ENCODE measurements at regions of chr4 and their contacts with region 1.

Region 1: DNA sequence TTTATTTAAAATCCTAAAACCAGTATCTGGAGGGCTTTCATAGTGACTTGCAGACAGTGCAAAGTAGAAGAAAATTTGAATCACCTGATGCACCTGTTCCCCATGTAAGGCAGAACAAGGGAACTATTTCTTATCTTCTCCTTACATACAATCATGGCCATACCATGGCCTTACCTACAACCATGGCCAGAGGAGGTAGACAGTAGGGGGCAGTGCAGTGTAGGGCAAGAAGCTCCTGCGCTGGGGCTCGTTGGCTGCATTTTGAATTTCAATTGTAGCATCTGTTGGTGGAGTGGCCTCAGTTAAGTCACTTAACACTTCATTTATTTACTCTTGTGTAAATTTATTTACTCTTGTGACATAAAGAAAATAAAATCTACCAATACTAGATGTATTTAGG is 33.0 kb downstream of the GALNTL6 start:
- DNase-seq: peak; percentile 69
- H3K4me3 Mint-ChIP-seq: no peak overlapping the region
- H3K27ac Mint-ChIP-seq: no peak overlapping the region
- H3K4me1 Mint-ChIP-seq: no peaks in the 10 kb centered on the region
- H3K27me3 Mint-ChIP-seq: no peaks in the 10 kb centered on the region
- CTCF ChIP-seq: peak; percentile 56

Region 2: DNA sequence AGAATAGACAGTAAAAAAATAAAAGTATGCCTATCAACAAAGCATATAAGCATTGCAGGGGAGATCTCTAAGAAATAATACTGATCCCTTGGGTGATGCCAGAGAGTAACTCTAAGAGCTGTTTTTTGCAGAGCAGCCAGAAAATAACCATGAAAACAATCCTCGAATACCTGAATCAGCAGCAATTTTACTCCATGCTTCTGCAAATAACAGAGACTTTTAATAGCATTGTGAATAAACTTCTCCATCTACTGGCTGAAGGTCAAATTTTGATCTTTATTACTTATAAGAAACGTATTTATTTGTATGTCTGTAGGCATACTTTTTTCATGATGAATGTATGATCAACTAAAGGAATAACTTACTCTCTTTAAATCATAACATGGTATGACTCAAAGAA is 301.5 kb after region 1 on chr4:
- CTCF ChIA-PET with region 1: no interaction called
- intact Hi-C with region 1: loop called (anchors 2 kb)
- DNase-seq: no peak
- H3K4me3 Mint-ChIP-seq: no peak overlapping the region
- H3K27ac Mint-ChIP-seq: no peak overlapping the region
- H3K4me1 Mint-ChIP-seq: peaks cover 9% of the 10 kb centered on the region
- H3K27me3 Mint-ChIP-seq: no peaks in the 10 kb centered on the region
- CTCF ChIP-seq: no peak

Region 3: DNA sequence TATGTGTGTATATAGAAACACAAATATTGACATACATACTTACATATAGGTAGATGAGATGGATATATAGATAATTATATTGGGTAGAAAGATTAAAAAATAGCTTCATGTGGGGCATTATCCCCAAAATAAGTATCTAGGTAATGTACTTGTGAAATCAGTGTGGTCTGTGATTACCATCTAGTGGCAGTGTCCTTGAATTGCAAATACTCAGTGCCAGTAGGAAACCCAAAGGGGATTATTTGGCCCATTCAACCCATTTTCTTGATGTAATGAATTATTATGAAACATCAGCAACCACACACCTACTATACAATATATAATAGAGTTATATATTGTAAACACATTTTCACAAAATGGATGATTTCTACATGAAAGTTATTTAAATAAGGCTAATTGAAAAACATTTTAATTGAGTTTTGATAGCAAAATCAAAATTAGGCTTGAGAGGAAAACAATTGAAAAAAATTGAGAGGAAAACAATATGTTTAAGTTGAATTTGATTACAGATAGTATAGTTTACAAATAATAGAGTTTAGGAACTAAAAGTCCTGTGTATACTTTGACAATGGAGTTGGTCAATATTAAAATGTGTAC is 356.3 kb after region 1 on chr4:
- CTCF ChIA-PET with region 1: no interaction called
- intact Hi-C with region 1: loop called (anchors 1 kb)
- DNase-seq: peak; percentile 2
- H3K4me3 Mint-ChIP-seq: no peak overlapping the region
- H3K27ac Mint-ChIP-seq: no peak overlapping the region
- H3K4me1 Mint-ChIP-seq: no peaks in the 10 kb centered on the region
- H3K27me3 Mint-ChIP-seq: no peaks in the 10 kb centered on the region
- CTCF ChIP-seq: no peak

Region 4: GRCh38 chr4:172830295-172830764 is 984.1 kb after region 1 on chr4:
- CTCF ChIA-PET with region 1: no interaction called
- intact Hi-C with region 1: loop called (anchors 5 kb)
- DNase-seq: no peak
- H3K4me3 Mint-ChIP-seq: no peak overlapping the region
- H3K27ac Mint-ChIP-seq: no peak overlapping the region
- H3K4me1 Mint-ChIP-seq: no peaks in the 10 kb centered on the region
- H3K27me3 Mint-ChIP-seq: no peaks in the 10 kb centered on the region
- CTCF ChIP-seq: peak; percentile 12

Measured in Calu3 (cell line).